Activated CD4-positive, alpha-beta T cell treated with anti-CD3 and anti-CD28 coated beads for 36 hours (primary cell): ENCODE measurements at regions of chr19 and their contacts with region 1.

Region 1: DNA sequence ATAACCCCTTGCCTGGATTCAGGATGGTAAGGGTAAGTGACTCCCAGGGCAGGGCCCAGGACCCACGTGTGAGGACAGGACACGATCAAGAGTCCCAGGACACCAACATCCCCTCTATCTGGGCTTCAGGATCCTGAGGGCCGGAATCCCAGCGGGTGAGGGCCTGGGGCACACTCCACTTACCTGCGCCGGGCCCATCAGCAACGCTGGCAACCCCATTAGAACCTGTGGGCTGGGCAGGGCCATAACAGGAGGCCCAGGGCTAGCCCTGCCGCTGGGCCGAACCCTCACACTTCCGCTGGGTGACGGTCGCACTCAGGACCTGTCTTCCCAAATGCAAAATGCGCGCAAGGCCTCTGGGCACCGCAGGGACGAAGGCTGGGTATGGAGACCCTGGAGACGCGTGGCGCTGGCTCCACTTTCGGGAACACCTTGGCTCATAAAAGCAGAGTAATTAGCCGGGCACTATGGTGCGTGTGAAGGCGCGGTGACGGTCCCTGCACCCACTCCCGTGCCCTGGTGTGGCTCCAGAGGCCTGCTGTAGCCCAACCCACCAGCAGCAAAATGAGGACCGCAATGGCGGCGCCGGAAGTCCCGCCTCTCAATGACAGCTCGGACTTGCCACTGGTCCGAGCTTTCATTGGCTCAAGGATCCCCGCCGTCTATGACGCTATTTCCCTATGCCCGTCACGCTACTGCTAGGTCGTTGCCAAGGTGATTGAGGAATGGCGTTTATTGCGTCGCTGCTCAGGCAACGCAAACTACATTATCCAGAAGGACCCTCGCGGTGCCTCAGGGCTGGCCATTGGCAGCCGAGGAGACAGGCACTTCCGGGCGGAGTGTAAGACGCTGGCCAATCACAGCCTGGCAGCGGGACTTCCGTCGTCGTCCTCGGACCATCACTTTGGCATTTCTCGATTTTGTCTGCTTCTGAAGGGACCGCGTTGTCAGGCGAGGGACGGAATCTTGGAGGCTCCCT is at the start of gene ZNF132:
- DNase-seq: peak; percentile 96
- ATAC-seq: peak; percentile 98
- H3K4me3 Mint-ChIP-seq: peak within 1 kb of the TSS; percentile 82
- H3K27ac Mint-ChIP-seq: peak within 1 kb of the TSS; percentile 95
- H3K4me1 Mint-ChIP-seq: peaks cover 29% of the 10 kb centered on the region
- H3K27me3 Mint-ChIP-seq: no peaks in the 10 kb centered on the region
- total RNA-seq, gene ZNF132: 3.3 to 4.4 TPM

Region 2: DNA sequence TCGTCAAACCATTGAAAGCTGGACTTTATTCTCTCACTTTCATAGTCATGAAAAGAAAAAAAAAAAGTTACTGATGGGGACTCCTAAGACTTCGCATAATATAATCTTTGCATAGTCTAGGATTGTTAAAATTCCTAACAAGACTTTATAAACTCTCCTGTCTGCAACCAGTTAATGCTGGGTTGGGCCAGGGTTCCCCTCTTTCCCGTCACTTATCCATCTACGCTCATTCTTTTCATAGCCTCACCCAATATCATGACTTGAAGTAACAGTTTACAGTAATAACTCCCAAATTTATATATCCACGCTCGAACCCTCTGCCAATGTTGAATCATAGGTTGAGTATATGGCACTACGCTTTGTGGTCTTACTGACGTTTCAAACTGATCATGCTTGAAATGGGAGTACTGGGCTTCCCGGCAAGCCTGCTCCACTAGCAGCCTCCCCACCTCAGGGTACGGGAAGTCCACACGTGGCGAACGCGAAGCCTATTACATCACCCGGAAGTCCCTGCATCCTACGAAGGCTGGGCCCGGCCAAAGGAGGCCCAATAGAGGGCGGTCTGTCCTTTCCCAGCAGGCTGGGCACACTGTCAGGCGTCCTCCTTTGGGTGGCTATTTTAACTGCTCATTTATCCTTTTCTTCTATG is 1160.3 kb before region 1 on chr19:
- CTCF ChIA-PET with region 1: no interaction called
- POLR2A ChIA-PET with region 1: no interaction called
- intact Hi-C with region 1: loop called in 1 of 2 experiments (anchors 2 kb)
- DNase-seq: peak; percentile 92
- ATAC-seq: peak; percentile 74
- H3K4me3 Mint-ChIP-seq: no peak overlapping the region
- H3K27ac Mint-ChIP-seq: no peak overlapping the region
- H3K4me1 Mint-ChIP-seq: peaks cover 31% of the 10 kb centered on the region
- H3K27me3 Mint-ChIP-seq: no peaks in the 10 kb centered on the region

Region 3: DNA sequence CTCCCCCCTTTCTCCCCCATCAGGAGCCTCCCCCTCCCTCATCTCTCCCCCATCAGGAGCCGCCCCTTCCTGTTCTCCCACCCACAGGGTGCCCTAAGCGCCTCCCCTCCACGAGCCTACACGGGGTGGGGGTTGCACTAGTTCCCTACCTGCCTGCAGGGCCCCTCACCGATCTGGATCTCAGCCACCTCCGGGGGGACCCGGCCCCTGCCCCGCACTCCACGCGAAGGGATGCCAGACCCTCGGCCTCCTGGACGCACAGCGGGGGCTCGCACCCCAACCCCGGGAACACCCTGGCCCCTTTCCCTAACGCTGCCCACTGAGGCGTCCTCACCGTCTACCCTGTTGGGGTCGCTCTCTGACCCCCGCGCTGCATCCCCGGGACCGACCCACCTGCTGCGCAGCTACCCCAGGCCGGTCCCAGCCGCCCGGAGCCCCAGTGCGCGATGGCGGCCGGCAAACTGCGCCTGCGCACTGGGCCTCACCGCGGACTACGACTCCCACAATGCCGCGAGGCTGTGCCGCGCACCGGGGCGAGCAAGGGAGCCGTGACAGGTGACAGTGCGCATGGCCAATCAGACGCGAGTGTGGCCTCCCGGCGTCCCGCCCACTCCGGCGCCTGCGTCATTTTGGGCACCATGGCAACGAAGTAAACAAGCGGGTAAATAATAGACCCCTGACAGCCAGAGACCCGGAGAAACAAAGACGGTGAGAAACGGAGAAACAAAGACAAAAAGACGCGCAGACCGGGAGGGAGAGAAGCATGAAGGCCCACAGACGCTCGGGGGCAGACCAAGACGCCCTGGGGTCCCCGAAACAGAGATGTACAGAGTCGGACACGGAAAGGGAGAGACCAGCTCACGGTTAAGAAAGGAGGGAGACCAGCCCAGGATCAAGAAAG is 341.8 kb before region 1 on chr19 and contains the start of gene ZSCAN18:
- CTCF ChIA-PET with region 1: no interaction called
- POLR2A ChIA-PET with region 1: no interaction called
- intact Hi-C with region 1: loop called in 1 of 2 experiments (anchors 5 kb)
- DNase-seq: peak; percentile 97
- ATAC-seq: peak; percentile 99
- H3K4me3 Mint-ChIP-seq: peak within 1 kb of the TSS; percentile 82
- H3K27ac Mint-ChIP-seq: peak within 1 kb of the TSS; percentile 97
- H3K4me1 Mint-ChIP-seq: peaks cover 13% of the 10 kb centered on the region
- H3K27me3 Mint-ChIP-seq: no peaks in the 10 kb centered on the region
- total RNA-seq, gene ZSCAN18: 23.1 to 29.2 TPM

Region 4: GRCh38 chr19:58305065-58305931 is 134.6 kb before region 1 on chr19 and contains the start of gene ERVK3-1:
- CTCF ChIA-PET with region 1: no interaction called
- POLR2A ChIA-PET with region 1: no interaction called
- intact Hi-C with region 1: loop called in 1 of 2 experiments (anchors 1 kb)
- DNase-seq: peak; percentile 97
- ATAC-seq: peak; percentile 98
- H3K4me3 Mint-ChIP-seq: peak within 1 kb of the TSS; percentile 99
- H3K27ac Mint-ChIP-seq: peak within 1 kb of the TSS; percentile 100
- H3K4me1 Mint-ChIP-seq: peaks cover 52% of the 10 kb centered on the region
- H3K27me3 Mint-ChIP-seq: no peaks in the 10 kb centered on the region
- total RNA-seq, gene ERVK3-1: 38.6 to 53.6 TPM

Region 5: GRCh38 chr19:58386576-58387337 is 53.1 kb before region 1 on chr19 and contains the start of gene RPS5:
- CTCF ChIA-PET with region 1: no interaction called
- POLR2A ChIA-PET with region 1: no interaction called
- intact Hi-C with region 1: loop called (anchors 1 kb)
- DNase-seq: peak; percentile 97
- ATAC-seq: peak; percentile 96
- H3K4me3 Mint-ChIP-seq: peak within 1 kb of the TSS; percentile 96
- H3K27ac Mint-ChIP-seq: peak within 1 kb of the TSS; percentile 97
- H3K4me1 Mint-ChIP-seq: peaks cover 33% of the 10 kb centered on the region
- H3K27me3 Mint-ChIP-seq: no peaks in the 10 kb centered on the region
- total RNA-seq, gene RPS5: 1,234 to 1,535 TPM

Region 6: DNA sequence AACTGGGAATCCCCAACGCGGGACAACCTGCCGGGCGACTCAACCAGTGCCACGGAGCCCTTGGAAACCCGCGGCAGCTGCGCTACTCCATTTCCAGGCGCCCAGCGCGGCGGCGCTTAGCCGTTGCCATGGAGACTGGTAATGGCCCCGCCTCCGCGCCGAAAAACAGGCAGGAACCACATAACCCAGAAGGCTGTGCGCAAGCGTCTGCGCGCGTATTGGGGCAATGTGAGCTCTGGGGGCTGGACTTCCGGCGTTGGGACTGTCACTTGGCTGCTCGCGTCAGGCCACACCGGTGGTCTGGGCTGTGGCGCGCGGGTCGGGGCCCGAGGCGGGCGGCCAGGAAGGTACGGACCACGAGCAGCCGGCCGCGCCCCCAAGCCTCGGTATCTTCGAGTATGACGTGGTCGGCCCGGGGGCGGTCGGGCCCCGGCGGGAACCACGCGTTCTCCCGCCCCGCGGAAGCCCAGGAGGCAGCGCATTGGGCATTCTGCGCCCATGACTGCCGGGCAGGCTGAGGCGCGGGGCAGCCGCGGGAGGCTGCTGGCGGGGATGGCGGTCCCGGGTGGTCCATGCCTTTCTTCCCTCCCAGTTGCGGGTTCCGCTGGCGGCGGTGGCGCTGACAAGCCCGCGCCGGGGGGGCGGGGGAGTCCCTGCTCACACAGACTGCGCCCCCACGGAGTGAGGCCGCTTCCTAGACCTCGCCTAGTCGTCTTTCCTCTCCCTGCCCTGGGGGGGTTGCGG is 11.7 kb after region 1 on chr19 and contains the start of gene ZNF324B:
- CTCF ChIA-PET with region 1: no interaction called
- POLR2A ChIA-PET with region 1: interaction called, 5 read pairs
- intact Hi-C with region 1: loop called (anchors 1 kb)
- DNase-seq: peak; percentile 98
- ATAC-seq: peak; percentile 99
- H3K4me3 Mint-ChIP-seq: peak within 1 kb of the TSS; percentile 77
- H3K27ac Mint-ChIP-seq: peak within 1 kb of the TSS; percentile 55
- H3K4me1 Mint-ChIP-seq: peaks cover 25% of the 10 kb centered on the region
- H3K27me3 Mint-ChIP-seq: peaks cover 15% of the 10 kb centered on the region
- total RNA-seq, gene ZNF324B: 5.8 to 7.5 TPM

Region 7: GRCh38 chr19:58499021-58499927 is 59.4 kb after region 1 on chr19:
- CTCF ChIA-PET with region 1: no interaction called
- POLR2A ChIA-PET with region 1: no interaction called
- intact Hi-C with region 1: loop called (anchors 1 kb)
- DNase-seq: peak; percentile 100
- ATAC-seq: peak; percentile 99
- H3K4me3 Mint-ChIP-seq: peak overlapping the region; percentile 81
- H3K27ac Mint-ChIP-seq: peak overlapping the region; percentile 95
- H3K4me1 Mint-ChIP-seq: peaks cover 19% of the 10 kb centered on the region
- H3K27me3 Mint-ChIP-seq: no peaks in the 10 kb centered on the region

Region 8: GRCh38 chr19:58531034-58531840 is 91.4 kb after region 1 on chr19:
- CTCF ChIA-PET with region 1: no interaction called
- POLR2A ChIA-PET with region 1: no interaction called
- intact Hi-C with region 1: no loop called
- DNase-seq: no peak
- ATAC-seq: no peak
- H3K4me3 Mint-ChIP-seq: no peak overlapping the region
- H3K27ac Mint-ChIP-seq: no peak overlapping the region
- H3K4me1 Mint-ChIP-seq: no peaks in the 10 kb centered on the region
- H3K27me3 Mint-ChIP-seq: no peaks in the 10 kb centered on the region